CD4-positive, alpha-beta T cell (primary cell): ENCODE measurements at regions of chrX and their contacts with region 1.

Region 1: DNA sequence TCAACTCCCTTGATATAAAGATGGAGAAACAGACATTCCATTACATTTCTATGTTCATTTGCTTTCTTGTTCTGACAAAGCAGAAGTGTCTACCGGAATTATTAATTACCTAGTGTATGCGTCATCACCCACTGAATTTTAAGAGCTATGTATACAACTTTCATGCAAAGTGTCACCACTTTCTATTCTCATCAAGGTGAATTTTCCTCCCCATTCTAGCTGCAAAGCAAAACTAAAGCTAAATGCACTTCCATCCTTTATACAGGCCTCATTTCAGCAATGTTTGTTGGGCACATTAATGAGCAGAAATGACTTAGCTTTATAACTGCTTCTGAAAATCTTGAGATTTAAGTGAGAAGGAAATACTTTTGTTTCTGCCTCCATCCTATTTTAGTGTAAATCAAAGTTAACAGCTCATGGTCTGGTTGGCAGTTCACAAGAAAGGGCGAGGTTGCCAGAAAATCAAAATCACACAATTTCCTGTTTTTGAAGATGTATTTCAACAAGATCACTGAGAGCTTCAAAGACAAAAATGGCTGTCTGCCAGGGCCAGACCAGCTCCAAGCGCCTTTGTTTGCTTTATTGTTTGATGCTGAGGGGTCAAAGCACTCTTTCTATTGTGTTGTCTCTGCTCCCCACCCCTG is 7.2 kb upstream of the FAM9C start:
- DNase-seq: peak in 13 of 14 experiments; percentile 30 to 77 (median 55)
- ATAC-seq: peak; percentile 83
- H3K4me3 ChIP-seq: no peak overlapping the region
- H3K4me3 Mint-ChIP-seq: peak overlapping the region; percentile 81
- H3K27ac ChIP-seq: peak overlapping the region; percentile 63 to 78
- H3K27ac Mint-ChIP-seq: peak overlapping the region; percentile 98
- H3K4me1 ChIP-seq: peaks cover 53% of the 10 kb centered on the region
- H3K4me1 Mint-ChIP-seq: peaks cover 82% of the 10 kb centered on the region
- H3K27me3 ChIP-seq: no peaks in the 10 kb centered on the region
- H3K27me3 Mint-ChIP-seq: no peaks in the 10 kb centered on the region
- CTCF ChIP-seq: no peak

Region 2: DNA sequence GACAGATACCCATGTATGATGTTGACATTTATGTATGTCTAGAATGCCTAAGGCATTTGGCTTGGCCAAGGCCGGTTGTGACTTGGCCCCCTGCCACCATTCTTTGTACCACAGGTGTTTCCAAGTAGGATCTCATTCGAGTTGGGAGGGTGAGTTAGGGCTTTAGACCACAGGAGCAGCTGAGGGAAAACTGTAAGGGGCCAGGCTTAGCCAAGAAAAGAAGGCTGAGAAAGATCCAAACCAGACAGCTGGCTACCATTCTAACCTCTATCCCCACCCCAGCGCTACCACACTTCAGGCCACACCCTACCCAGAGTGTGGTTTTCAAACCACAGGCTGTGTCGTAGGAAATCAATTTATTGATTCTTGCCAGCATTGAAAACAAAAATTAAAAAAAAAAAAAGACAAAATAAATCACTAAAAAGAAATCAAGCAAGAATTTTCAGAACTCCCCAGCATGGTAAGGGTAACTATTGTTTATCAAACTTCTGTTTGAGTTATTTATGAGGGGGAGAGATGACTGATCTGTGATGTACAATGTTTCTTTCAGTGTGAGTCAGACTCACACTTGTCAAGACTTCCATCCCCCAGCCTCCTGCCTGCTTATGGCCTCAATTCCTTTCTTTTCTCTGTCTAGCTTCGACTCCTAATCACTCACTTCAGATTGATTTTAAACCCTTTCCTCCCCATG is 66.9 kb before region 1 on chrX:
- CTCF ChIA-PET with region 1: no interaction called
- POLR2A ChIA-PET with region 1: interaction called, 214 read pairs
- intact Hi-C with region 1: no loop called
- DNase-seq: peak in 10 of 14 experiments; percentile 35 to 80 (median 52)
- ATAC-seq: peak; percentile 77
- H3K4me3 ChIP-seq: peak overlapping the region; percentile 12
- H3K4me3 Mint-ChIP-seq: peak overlapping the region; percentile 82
- H3K27ac ChIP-seq: peak overlapping the region; percentile 66 to 69
- H3K27ac Mint-ChIP-seq: peak overlapping the region; percentile 95
- H3K4me1 ChIP-seq: peaks cover 80% of the 10 kb centered on the region
- H3K4me1 Mint-ChIP-seq: peaks cover 76% of the 10 kb centered on the region
- H3K27me3 ChIP-seq: no peaks in the 10 kb centered on the region
- H3K27me3 Mint-ChIP-seq: no peaks in the 10 kb centered on the region
- CTCF ChIP-seq: no peak

Region 3: DNA sequence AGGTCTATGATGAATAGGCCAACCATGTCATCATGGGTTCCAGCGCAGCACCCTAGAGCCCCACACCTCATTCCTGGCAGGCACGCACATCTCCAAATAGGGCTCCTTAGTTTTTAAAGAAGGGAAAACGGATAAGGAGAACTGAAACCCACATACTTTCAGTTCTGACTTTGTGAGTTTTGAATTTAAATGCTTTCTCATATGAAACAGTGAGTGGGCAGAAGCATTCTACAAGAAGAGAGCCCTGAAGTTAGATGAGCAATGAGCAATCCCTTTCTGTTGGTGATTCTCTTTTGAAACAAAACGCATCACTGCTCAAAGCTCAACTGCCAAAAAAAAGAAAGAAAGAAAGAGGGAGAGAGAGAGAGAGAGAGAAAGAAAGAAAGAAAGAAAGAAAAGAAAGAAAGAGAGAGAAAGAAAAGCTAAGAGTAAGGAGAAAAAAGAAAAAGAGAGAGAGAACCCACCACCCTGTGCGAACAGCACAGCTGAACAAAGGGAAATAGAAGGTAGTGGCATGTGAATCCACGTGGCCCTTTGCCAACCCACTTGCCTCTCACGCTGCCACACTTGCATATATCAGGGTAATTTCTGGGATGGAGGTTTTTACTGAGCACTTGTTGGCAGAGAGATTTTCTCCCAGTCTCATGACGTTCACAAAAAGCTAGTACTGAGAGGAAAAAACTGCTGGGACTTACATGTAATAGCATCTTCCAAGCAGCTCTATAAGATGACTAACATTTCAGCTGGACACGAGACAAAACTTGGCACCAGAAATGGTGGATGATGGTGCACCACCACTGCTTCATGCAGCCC is 45.8 kb before region 1 on chrX:
- CTCF ChIA-PET with region 1: no interaction called
- POLR2A ChIA-PET with region 1: interaction called, 13 read pairs
- intact Hi-C with region 1: loop called in 1 of 2 experiments (anchors 5 kb)
- DNase-seq: peak in 9 of 14 experiments; percentile 13 to 63 (median 26)
- ATAC-seq: peak; percentile 60
- H3K4me3 ChIP-seq: no peak overlapping the region
- H3K4me3 Mint-ChIP-seq: peak overlapping the region; percentile 86
- H3K27ac ChIP-seq: peak overlapping the region; percentile 43 to 48
- H3K27ac Mint-ChIP-seq: peak overlapping the region; percentile 96
- H3K4me1 ChIP-seq: peaks cover 60% of the 10 kb centered on the region
- H3K4me1 Mint-ChIP-seq: peaks cover 75% of the 10 kb centered on the region
- H3K27me3 ChIP-seq: no peaks in the 10 kb centered on the region
- H3K27me3 Mint-ChIP-seq: no peaks in the 10 kb centered on the region
- CTCF ChIP-seq: no peak

Region 4: DNA sequence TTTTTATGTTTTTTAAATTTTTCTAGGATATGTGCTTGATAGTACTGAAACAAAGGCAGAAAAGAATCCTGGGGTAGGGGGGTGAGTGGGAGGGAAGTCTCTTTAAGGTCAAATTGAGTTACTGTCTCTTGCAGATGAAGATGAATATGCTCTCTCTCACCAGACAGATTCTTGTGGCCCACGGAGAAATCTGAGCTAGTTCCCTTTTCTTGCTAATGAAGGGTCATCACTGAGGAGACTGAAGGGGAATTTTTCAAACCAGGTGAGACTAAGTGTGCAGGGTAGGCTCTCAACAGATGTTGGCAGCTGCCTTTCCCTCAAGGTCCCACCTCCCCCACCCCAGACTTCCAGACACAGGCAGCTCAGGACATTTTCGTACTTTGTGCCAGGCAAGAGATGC is 28.7 kb before region 1 on chrX:
- CTCF ChIA-PET with region 1: no interaction called
- POLR2A ChIA-PET with region 1: interaction called, 85 read pairs
- intact Hi-C with region 1: no loop called
- DNase-seq: no peak
- ATAC-seq: no peak
- H3K4me3 ChIP-seq: no peak overlapping the region
- H3K4me3 Mint-ChIP-seq: peak overlapping the region; percentile 60
- H3K27ac ChIP-seq: no peak overlapping the region
- H3K27ac Mint-ChIP-seq: peak overlapping the region; percentile 69
- H3K4me1 ChIP-seq: peaks cover 45% of the 10 kb centered on the region
- H3K4me1 Mint-ChIP-seq: peaks cover 53% of the 10 kb centered on the region
- H3K27me3 ChIP-seq: no peaks in the 10 kb centered on the region
- H3K27me3 Mint-ChIP-seq: no peaks in the 10 kb centered on the region
- CTCF ChIP-seq: no peak

Region 5: DNA sequence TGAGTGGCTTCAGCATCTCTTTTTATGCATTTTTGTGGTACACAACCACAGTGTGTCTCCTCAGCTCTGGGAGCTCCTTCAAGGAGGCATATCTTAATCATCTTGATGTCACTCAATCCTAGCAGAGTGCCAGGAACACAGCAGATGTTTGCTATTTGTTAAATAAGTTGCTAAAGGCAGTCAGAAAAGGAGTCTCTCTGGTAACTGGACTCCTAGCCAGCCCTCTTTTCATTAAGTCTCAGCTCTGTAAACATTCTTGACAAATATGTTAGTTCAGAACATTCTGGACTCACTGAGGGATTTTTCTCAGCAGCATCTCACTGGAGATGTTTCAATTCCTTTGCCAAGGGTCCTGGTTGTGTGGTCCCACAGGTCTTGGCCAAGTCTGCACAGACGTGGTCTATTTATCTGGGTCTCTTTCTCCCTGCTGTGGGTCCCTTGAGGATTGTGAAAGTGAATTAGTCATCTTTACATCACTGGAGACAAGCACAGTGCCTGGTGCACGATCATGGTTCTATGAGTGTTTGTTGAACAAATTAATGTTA is 13.0 kb after region 1 on chrX:
- CTCF ChIA-PET with region 1: no interaction called
- POLR2A ChIA-PET with region 1: interaction called, 11 read pairs
- intact Hi-C with region 1: no loop called
- DNase-seq: no peak
- ATAC-seq: no peak
- H3K4me3 ChIP-seq: no peak overlapping the region
- H3K4me3 Mint-ChIP-seq: no peak overlapping the region
- H3K27ac ChIP-seq: no peak overlapping the region
- H3K27ac Mint-ChIP-seq: no peak overlapping the region
- H3K4me1 ChIP-seq: peaks cover 30% of the 10 kb centered on the region
- H3K4me1 Mint-ChIP-seq: peaks cover 49% of the 10 kb centered on the region
- H3K27me3 ChIP-seq: no peaks in the 10 kb centered on the region
- H3K27me3 Mint-ChIP-seq: no peaks in the 10 kb centered on the region
- CTCF ChIP-seq: no peak